ENCODE measurements at regions of chr5 and their contacts with region 1.

Region 1: DNA sequence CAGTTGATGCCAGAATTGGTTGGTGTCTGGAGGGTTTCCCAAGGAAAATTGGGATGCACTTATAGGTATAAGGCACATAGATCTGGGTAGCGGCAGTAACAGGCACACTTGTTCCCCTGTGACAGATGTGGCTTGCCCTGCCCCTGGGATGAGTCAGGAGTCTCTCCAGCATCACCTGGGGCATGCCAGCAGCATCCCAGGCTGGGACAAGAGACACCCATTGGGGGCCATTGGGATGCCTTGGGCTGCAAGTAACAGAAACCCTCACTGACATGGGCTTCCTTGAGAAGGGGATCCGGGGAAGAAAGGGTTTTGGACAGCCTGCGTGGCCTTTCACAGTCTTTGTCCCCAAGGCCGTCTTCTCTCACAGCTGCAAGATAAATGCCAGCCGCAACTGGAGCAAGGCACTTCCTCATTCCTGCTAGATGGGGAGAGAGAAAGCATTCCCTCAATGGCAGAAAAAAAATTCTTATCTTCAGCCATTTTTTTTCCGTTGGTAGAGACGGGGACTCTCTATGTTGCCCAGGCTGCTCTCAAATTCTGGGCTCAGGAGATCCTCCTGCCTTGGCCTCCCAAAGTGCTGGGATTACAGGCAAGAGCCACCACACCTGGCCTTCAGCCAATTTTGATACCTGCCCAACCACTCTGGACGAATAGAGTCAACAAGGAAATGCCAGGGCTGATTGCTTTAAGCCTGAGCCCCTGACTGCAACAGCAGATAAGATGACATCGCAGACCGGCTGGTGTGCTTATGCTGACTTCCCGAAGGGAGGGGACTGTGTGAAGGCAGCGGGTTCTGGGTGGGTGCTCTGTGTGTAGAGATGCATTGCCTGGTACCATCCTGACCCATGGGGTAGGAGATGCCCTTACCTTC is 13.4 kb upstream of the RNF130 start:
- DNase-seq: peak in 6 of 42 donors; percentile 9 to 45 (median 18)

Region 2: GRCh38 chr5:179986328-179986727 is 98.6 kb before region 1 on chr5:
- intact Hi-C with region 1: loop called (anchors 10 kb)
- DNase-seq: no peak